Heart right ventricle (tissue), 16 donors: ENCODE measurements at regions of chr2 and their contacts with region 1.

Region 1: GRCh38 chr2:204517154-204517553 is 28.1 kb upstream of the PARD3B start:
- DNase-seq: no peak
- ATAC-seq: no peak
- H3K4me3 ChIP-seq: no peak overlapping the region
- H3K27ac ChIP-seq: no peak overlapping the region
- H3K4me1 ChIP-seq: no peaks in the 10 kb centered on the region
- H3K27me3 ChIP-seq: no peaks in the 10 kb centered on the region
- CTCF ChIP-seq: no peak

Region 2: DNA sequence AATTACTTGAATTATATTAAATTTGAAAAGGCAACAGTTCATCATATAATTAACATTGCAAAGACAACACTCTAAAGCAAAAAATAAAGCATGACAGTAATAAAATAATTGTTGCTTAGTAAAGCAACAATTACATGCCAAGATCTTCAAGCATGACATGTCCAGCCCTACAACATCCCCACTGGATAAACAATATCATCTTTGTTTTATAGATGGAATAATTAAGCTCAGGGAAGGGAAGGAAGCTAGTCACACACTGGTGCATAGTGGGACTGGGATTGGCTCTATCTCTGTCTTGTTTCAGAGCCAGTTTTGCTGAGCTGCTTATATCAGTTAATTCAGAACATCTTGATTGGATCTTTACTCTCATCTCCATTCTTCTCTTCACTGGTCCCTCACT is 21.8 kb before region 1 on chr2:
- intact Hi-C with region 1: loop called in 1 of 10 experiments (anchors 2 kb)
- DNase-seq: no peak
- ATAC-seq: no peak
- H3K4me3 ChIP-seq: no peak overlapping the region
- H3K27ac ChIP-seq: no peak overlapping the region
- H3K4me1 ChIP-seq: no peaks in the 10 kb centered on the region
- H3K27me3 ChIP-seq: no peaks in the 10 kb centered on the region
- CTCF ChIP-seq: no peak